ENCODE measurements at regions of chr20 and their contacts with region 1.

Region 1: GRCh38 chr20:34579191-34579978 is 20.9 kb downstream of the MAP1LC3A start:
- DNase-seq: peak; percentile 55 to 77
- H3K4me3 ChIP-seq: no peak overlapping the region
- H3K27ac ChIP-seq: no peak overlapping the region
- H3K4me1 ChIP-seq: peaks cover 0 to 19% (median 6%) of the 10 kb centered on the region in 4 donors
- H3K27me3 ChIP-seq: no peaks in the 10 kb centered on the region
- CTCF ChIP-seq: peak; percentile 60 to 67

Region 2: GRCh38 chr20:34643919-34644318 is 64.5 kb after region 1 on chr20:
- intact Hi-C with region 1: no loop called
- DNase-seq: peak in 1 of 2 donors; percentile 38
- H3K4me3 ChIP-seq: no peak overlapping the region
- H3K27ac ChIP-seq: no peak overlapping the region
- H3K4me1 ChIP-seq: no peaks in the 10 kb centered on the region
- H3K27me3 ChIP-seq: no peaks in the 10 kb centered on the region
- CTCF ChIP-seq: no peak

Region 3: DNA sequence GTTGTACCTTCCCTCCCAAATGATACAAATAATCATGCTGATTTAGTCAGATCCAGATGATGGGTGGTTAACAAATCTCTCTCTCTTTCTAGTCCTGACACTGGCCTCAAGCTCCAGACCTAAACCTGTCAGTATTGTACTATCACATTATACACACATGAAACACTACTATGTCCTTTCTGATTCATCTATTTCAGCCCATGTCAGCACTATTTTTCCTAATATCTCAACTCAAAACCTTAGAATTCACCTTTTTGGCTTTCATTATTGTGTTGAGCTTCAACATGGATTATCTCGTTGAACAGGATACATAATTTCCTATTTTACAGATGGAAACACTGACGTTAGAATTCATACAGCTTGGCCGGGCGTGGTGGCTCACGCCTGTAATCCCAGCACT is 94.0 kb after region 1 on chr20:
- intact Hi-C with region 1: loop called (anchors 5 kb)
- DNase-seq: no peak
- H3K4me3 ChIP-seq: no peak overlapping the region
- H3K27ac ChIP-seq: no peak overlapping the region
- H3K4me1 ChIP-seq: peaks cover 0 to 13% (median 4%) of the 10 kb centered on the region in 4 donors
- H3K27me3 ChIP-seq: no peaks in the 10 kb centered on the region
- CTCF ChIP-seq: no peak

Region 4: DNA sequence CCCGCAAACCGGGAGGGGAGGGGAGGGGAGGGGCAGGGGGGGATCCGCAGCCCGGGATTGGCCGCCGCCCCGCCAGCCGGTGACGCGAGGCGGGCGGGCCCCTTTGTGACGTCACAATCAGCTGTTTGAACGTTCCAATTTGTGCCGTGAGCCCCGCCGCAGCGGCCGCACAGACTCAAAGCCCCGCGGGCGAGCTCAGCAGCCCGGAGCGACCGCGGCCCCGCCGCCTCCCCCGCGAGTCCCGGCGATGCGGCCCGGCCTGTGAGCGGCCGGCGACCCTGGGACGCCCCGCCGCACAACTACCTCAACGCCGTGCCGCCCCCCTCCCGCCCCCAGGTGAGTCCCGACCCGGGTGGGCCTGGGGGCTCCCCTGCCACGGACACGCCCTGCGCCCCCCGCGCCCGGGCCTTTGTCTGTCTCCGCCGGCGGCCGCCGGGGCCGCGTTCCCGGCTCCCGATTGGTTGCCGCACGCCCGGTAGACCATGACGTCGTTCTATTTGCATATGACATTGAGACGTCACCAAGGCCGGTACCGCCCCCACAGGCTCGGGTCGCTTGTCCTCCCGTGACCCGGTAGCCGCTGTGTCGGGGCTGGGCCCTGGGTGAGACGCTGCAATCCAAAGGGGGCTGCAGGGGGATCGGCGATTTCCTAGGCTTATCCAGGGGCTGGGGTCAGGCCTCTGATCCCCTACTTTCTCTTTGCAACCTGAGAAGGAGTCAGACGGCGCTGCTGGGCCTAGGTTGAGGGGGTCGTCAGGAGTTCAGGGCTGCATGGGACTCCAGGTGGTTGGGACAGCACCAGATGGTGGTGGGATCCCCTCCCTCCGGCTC is 125.0 kb after region 1 on chr20 and contains the start of gene TP53INP2:
- intact Hi-C with region 1: loop called (anchors 5 kb)
- DNase-seq: peak; percentile 91 to 96
- H3K4me3 ChIP-seq: peak within 1 kb of the TSS; percentile 84 to 88
- H3K27ac ChIP-seq: peak within 1 kb of the TSS; percentile 96 to 99
- H3K4me1 ChIP-seq: peaks cover 0 to 30% (median 19%) of the 10 kb centered on the region in 4 donors
- H3K27me3 ChIP-seq: no peaks in the 10 kb centered on the region
- CTCF ChIP-seq: no peak

Region 5: DNA sequence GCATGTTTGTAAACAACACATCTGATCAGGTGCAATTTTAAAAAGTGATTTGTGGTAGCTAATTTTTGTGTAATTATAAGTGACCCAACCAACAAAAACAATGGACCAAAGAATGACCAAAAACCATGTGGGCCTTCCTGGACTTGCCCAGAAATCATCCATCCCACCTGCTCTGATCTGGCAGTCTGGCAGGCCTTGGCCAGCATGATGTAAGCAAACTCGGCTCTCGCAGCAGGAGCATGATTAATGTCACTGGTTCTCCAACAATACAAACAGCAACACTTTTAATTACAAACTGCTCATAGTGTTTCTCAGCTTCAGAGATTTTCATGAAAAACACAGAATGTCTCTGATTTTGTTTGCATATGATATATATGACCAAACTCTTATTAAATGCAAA is 140.9 kb after region 1 on chr20:
- intact Hi-C with region 1: no loop called
- DNase-seq: no peak
- H3K4me3 ChIP-seq: no peak overlapping the region
- H3K27ac ChIP-seq: no peak overlapping the region
- H3K4me1 ChIP-seq: no peaks in the 10 kb centered on the region
- H3K27me3 ChIP-seq: no peaks in the 10 kb centered on the region
- CTCF ChIP-seq: no peak

Region 6: DNA sequence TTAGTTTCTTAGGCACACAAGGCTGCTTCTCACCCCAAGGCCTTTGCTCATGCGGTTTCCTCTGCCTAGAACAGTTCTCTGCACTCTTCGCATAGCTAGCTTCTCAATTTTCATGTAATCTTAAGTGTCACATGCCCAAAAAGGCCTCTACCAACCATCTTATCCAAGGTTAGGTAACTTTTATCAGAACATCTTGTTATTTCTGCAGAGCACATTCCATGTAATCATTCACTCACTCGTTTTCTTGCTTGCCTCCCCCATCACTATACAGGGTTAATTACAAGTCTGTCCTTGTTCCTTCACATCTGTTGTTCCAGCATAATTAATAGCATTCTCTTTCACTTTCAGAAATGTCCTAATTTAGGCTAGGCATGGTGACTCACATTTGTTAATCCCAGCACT is 192.3 kb after region 1 on chr20:
- intact Hi-C with region 1: loop called (anchors 5 kb)
- DNase-seq: no peak
- H3K4me3 ChIP-seq: no peak overlapping the region
- H3K27ac ChIP-seq: no peak overlapping the region
- H3K4me1 ChIP-seq: no peaks in the 10 kb centered on the region
- H3K27me3 ChIP-seq: no peaks in the 10 kb centered on the region
- CTCF ChIP-seq: no peak

Region 7: DNA sequence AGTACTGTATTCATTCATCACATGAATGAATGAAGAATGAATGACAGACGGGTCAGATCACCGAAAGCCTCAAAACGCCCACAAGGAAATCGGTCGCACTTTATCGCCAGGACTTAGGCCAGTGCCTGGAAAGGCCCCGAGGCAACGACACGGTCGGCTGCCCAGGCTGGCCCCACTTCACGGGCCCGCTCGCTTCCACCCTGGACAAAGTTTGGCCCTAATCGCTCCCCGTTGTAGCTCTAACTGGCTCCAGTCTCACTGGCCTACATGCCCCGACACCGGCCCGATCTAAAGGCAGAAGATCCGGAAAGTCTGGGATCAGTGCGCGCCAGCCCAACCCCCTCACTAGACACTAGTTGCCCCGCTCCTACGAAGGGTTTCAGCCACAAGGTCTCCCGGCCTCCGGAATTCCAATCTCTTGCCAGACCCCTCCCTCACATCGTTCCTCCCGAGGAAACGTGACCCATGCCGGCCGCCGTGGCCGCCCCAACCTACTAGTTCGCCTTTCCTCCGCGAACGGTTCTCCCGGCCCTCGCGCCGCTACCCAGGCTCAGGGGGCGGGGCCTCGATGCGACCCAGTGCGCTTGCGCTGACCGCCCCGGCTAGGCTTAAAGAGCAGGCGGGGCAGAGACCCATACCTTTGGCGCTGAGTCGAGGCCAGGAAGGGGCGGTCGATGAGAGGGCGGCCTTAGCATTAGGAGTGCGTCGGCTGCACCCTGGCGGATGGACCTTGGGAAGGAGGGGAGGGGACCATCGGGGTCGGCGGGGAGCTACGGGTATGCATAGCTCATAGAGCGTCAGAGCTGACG is 376.1 kb after region 1 on chr20 and contains the starts of genes GSS and MYH7B:
- intact Hi-C with region 1: no loop called
- DNase-seq: peak; percentile 97 to 98
- H3K4me3 ChIP-seq: peak within 1 kb of the TSS; percentile 63 to 64
- H3K27ac ChIP-seq: peak within 1 kb of the TSS; percentile 83 to 90
- H3K4me1 ChIP-seq: peaks cover 0 to 18% (median 9%) of the 10 kb centered on the region in 4 donors
- H3K27me3 ChIP-seq: no peaks in the 10 kb centered on the region
- CTCF ChIP-seq: peak; percentile 55 to 70

Measured in tibial artery (tissue), 4 donors.